ENCODE measurements at regions of chr1 and their contacts with region 1.

Region 1: GRCh38 chr1:32005522-32005921 is 8.1 kb upstream of the KHDRBS1 start:
- DNase-seq: peak; percentile 55
- H3K4me3 ChIP-seq: no peak overlapping the region
- H3K27ac ChIP-seq: no peak overlapping the region
- H3K4me1 ChIP-seq: peaks cover 43% of the 10 kb centered on the region
- CTCF ChIP-seq: no peak

Region 2: GRCh38 chr1:31949862-31950261 is 55.7 kb before region 1 on chr1:
- CTCF ChIA-PET with region 1: no interaction called
- POLR2A ChIA-PET with region 1: no interaction called
- intact Hi-C with region 1: no loop called
- DNase-seq: no peak
- H3K4me3 ChIP-seq: no peak overlapping the region
- H3K27ac ChIP-seq: no peak overlapping the region
- H3K4me1 ChIP-seq: peaks cover 14% of the 10 kb centered on the region
- CTCF ChIP-seq: no peak

Region 3: GRCh38 chr1:31970873-31971272 is 34.6 kb before region 1 on chr1:
- CTCF ChIA-PET with region 1: no interaction called
- POLR2A ChIA-PET with region 1: interaction called, 10 read pairs
- intact Hi-C with region 1: no loop called
- DNase-seq: no peak
- H3K4me3 ChIP-seq: no peak overlapping the region
- H3K27ac ChIP-seq: no peak overlapping the region
- H3K4me1 ChIP-seq: no peaks in the 10 kb centered on the region
- CTCF ChIP-seq: no peak

Region 4: DNA sequence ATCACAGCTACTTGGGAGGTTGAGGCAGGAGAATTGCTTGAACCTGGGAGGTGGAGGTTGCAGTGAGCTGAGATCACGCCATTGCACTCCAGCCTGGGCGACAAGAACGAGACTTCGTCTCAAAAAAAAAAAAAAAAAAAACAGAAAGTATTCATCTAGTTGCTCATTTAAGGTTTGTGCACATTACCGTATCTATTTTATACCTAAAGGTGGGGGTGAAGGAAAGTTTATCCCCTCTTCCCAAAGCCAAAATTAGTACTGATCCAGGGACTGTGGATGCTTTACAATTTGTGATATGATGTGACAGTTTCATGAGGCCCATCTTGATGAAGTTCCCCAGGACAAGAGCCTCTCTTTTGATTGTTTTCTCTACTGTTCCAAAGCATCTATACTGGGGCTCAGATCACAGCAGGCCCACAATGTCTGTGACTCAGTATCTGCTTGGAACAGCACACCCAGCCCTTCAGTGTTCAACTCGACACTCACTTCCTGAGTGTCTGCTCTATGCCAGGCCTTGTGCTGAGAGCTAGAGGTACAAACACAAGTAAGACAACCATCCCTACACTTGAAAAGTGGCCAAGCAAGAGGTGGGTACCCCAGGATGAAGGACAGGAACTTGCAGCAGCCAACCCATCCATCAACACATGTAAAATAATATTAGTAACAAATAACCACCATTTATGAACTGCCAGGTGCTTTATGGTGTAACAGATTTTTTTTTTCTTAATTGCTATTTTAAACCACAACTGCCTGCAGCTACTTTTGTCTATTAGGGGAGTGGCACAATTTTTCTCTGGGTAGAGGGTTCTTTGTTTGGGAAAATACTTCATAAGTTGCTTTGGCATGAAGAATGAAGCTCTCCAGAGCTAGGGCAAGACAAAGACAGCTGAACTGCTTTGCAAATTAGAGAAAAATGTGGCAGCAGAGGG is 20.8 kb before region 1 on chr1:
- CTCF ChIA-PET with region 1: no interaction called
- POLR2A ChIA-PET with region 1: interaction called, 6 read pairs
- intact Hi-C with region 1: loop called (anchors 2 kb)
- DNase-seq: peak; percentile 73
- H3K4me3 ChIP-seq: peak overlapping the region; percentile 40
- H3K27ac ChIP-seq: peak overlapping the region; percentile 97
- H3K4me1 ChIP-seq: peaks cover 65% of the 10 kb centered on the region
- CTCF ChIP-seq: no peak

Region 5: DNA sequence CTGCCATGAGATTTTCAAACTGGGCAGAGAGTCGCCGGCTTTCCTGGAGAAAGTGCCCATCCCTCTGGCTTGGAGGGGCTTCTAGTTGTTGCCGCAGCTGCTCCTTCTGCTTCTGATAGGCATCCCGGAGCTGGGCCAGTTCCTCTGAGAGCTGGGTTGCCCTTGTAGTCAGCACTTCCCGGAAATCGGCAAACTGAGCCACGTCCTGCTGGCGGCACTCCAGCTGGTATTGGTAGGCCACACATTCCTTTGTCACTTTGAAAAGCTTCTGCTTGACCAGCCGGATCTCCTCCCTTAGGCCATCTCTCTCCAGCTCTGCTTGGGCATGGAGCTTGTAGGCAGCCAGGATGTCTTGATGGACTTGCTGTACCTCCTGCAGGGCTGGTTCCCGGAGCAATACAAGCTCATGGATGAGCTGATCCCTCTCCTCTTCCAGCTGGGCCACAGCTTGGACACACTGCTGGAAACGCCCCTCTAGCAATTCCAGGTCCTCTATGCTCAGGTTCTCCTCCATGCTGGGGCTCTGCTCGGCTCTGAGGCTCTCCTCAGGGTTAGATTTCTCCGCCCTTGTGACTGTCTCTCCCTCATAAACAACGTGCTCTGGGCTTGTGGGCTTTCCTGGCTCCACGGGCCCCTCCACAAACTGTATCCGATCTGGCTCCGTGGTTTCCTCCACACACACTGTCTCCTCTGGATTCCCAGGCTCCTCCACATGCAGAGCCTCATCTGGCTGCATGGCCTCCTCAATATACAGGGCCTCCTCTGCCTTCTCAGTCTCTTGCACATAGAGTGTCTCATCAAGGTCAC is 689.8 kb after region 1 on chr1:
- CTCF ChIA-PET with region 1: no interaction called
- POLR2A ChIA-PET with region 1: no interaction called
- intact Hi-C with region 1: no loop called
- DNase-seq: no peak
- H3K4me3 ChIP-seq: no peak overlapping the region
- H3K27ac ChIP-seq: no peak overlapping the region
- H3K4me1 ChIP-seq: no peaks in the 10 kb centered on the region
- CTCF ChIP-seq: no peak

Measured in OCI-LY7 (cell line).